Head of caudate nucleus (tissue), 42 donors: ENCODE measurements at regions of chr12 and their contacts with region 1.

Region 1: GRCh38 chr12:10140001-10140400 is 10.0 kb upstream of the CLEC7A start:
- DNase-seq: peak in 35 of 42 donors; percentile 25 to 79 (median 54)

Region 2: GRCh38 chr12:9745199-9745598 is 394.8 kb before region 1 on chr12:
- intact Hi-C with region 1: loop called (anchors 5 kb)
- DNase-seq: no peak

Region 3: DNA sequence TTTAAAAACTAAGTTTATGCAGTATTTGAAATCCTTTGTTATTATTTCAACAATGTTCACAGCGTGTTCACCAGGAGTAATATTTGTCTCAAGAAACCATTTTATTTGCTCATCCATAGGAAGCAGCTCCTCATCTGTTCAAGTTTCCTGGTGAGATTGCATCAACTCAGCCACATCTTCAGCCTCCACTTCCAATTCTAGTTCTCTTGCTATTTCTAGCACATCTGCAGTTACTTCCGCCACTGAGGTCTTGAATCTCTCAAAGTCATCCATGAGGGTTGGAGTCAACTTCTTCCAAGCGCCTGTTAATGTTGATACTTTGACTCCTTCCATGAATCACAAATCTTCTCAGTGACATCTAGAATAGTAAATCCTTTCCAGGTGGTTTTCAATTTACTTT is 91.5 kb before region 1 on chr12:
- intact Hi-C with region 1: loop called (anchors 10 kb)
- DNase-seq: peak in 3 of 42 donors; percentile 6 to 15 (median 12)

Region 4: DNA sequence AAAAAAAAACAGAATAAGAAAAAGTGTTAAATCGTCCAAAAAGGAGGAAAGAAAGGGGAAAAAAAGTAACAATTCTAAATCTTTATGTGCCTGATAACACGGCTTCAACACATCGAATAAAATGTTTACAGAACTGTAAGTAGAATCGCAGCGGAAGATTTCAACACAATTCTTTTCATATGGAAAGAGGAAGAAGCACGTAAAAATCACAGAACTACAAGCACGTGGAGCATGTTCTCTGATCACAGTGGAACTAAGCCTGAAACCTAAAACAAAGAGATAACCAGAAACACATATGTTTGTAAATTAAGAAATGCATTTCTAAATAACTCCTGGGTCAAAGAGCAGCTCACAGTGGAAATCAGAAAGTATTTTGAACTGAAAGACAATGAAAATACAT is 18.7 kb before region 1 on chr12:
- intact Hi-C with region 1: no loop called
- DNase-seq: no peak

Region 5: DNA sequence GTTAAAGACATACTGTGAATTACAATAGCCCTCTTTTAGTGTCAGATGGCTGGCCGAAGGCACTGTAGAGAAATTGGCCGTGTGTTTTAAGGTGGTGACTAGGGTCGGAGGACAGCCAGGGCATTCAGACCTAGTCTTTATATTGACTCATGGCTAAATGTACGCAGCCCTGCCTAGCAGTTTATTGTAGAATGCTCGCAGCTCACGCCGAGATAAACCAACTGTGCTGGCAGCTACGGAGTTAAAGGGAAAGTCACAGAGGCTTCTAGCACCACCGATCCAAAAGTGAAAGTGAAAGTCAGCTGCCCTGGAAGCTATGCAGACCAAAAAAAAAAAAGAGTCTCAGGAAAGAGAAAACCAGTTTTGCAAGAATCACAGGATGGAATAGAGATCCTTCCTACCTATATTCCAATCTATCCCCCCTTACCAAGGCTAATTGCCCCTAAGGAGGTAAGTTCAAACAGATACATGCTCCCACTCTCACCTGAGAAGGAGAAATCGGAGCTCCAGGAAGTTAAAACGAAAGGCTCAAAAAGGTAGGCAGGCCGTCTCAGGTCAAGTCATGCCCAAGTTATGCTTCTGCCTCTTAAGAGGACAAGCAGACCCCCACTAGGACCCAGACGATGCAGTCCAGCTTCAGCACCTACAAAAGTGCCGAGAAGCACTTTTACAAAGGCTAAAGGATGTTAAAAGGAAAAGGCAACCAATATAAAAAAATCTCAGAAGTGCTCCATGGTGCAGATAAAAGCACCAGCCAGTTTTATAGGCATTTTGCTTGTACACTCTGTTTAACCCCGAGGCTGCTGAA is 225.0 kb after region 1 on chr12:
- intact Hi-C with region 1: no loop called
- DNase-seq: peak in 40 of 42 donors; percentile 30 to 88 (median 65)